Posterior vena cava (tissue), 2 donors: ENCODE measurements at regions of chr5 and their contacts with region 1.

Region 1: GRCh38 chr5:12805165-12805707 is 901.0 kb upstream of the CTNND2 start:
- DNase-seq: peak; percentile 36

Region 2: GRCh38 chr5:12730354-12730753 is 74.9 kb before region 1 on chr5:
- intact Hi-C with region 1: loop called in 1 of 2 experiments (anchors 2 kb)
- DNase-seq: no peak

Region 3: GRCh38 chr5:12861886-12862654 is 56.8 kb after region 1 on chr5:
- intact Hi-C with region 1: no loop called
- DNase-seq: no peak